ENCODE measurements at regions of chr15 and their contacts with region 1.

Region 1: DNA sequence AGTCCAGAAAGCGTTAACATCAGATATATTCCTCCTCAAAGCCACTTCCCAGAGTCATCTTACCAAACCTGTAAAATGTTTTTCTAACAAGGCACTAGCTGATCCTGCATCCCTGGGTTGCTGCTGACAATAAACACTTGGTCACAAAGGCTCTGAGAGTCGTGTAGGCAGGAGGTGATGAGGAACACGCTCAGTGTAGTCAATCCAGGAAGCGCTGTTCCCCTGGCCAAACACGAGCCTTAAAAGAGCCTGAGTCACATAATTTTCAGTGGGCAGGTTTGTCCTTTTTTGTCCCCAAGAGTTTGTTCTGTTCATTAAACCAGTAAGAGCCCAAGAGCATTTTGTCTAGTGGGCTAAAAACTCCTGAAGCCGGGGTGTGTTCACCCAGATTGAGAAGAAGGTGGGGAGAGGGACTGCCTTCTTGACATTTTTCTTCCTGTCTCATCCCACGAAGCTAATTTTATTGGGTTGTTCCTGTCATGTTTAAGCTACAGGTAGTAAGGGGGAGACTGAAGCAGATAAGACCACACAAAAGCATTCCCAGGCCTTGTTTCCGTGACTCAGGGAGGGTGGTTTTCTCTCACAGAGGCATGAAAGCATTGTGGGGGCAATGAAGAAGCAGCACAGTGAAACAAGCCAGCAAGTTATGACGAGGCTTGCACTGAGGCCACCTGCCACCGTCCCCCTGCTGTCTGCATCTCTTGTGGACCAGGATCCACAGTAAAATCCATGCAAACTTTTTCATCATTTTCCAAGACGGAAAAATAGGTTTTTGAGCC is 73.7 kb downstream of the FOXB1 start:
- DNase-seq: peak; percentile 70
- H3K4me3 Mint-ChIP-seq: no peak overlapping the region
- H3K27ac Mint-ChIP-seq: peak overlapping the region; percentile 62
- H3K4me1 Mint-ChIP-seq: peaks cover 52% of the 10 kb centered on the region
- H3K27me3 Mint-ChIP-seq: peaks cover 13% of the 10 kb centered on the region

Region 2: DNA sequence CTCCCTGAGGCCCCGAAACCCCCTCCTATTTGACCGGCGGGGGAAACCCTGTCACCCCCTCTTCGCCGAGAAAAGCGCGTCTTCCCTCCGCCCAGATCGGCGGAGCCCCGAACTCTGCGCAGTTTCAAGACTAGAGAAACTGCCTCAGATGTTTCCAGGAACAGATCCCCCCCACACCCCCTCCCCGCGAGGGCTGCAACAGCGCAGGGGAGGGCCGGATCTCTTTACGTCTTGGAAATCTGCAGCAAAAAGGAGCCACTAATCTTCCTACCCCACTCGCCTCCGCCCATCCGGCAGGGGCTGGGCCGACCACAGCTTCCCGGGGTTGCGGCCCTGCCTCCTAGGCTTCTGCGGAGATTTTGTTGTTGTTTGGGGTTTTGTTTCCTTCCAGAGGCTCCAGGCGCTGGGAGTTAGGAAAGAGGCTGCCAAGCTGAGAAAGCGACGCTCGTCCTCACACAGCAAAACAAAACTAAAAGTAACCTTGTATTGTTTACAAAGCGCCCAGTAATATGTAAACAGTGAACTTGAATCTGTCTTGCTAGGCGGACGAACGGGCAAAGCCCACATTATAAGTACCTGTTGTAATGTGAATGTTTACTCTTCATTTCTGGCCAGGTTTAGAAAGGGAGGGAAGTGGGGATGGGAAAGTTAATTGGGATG is 71.4 kb before region 1 on chr15:
- CTCF ChIA-PET with region 1: interaction called, 3 read pairs
- POLR2A ChIA-PET with region 1: no interaction called
- intact Hi-C with region 1: loop called (anchors 2 kb)
- DNase-seq: peak; percentile 87
- H3K4me3 Mint-ChIP-seq: peak overlapping the region; percentile 84
- H3K27ac Mint-ChIP-seq: peak overlapping the region; percentile 77
- H3K4me1 Mint-ChIP-seq: peaks cover 45% of the 10 kb centered on the region
- H3K27me3 Mint-ChIP-seq: peaks cover 85% of the 10 kb centered on the region

Region 3: DNA sequence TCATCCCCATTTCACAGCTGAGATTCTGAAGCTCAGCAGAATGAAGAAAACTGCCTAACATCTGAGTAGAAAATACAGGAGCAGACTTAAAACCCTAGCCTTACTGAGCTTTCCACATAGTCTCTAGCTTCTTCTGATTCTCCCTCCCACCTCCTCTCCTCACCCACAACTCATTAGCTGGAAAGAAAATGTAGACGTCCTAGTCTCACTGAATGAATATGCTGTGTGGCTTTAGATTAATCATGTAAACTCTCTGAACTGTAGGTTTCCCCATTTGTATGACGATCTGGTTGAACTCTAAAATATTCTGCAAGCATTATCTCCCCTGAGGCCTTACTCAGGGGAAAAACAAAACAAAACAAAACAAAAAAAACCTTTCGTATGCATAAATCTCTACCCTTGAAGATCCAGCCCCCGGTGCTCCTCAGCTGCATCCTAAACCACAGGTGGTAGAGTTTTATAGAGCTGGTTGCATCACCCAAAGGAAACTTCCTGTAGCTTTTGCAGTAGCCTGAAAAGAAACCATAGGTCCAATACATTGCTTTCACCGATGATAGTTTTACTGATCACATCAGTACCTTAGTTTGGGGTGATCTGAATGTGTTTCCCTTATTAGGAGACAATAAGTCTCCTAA is 33.0 kb before region 1 on chr15:
- CTCF ChIA-PET with region 1: no interaction called
- POLR2A ChIA-PET with region 1: interaction called, 5 read pairs
- intact Hi-C with region 1: loop called (anchors 1 kb)
- DNase-seq: peak; percentile 57
- H3K4me3 Mint-ChIP-seq: peak overlapping the region; percentile 46
- H3K27ac Mint-ChIP-seq: peak overlapping the region; percentile 75
- H3K4me1 Mint-ChIP-seq: peaks cover 19% of the 10 kb centered on the region
- H3K27me3 Mint-ChIP-seq: peaks cover 4% of the 10 kb centered on the region

Region 4: DNA sequence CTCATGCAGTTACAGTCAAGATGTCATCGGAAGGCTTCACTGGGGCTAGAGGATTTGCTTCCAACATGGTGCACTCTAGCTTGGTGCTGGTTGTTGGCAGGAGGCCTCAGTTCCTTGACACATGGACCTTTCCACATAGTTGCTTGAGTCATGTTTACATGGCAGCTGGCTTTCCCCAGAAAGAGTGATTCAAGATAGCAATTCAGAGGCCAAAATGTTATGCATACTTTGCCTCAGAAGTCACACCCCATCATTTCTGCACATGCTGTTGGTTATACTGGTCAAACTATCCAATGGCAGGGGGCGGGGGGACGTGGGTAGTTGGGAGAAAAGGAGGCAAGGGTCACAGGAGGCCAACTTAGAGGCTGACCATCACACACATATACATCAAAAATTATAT is 14.9 kb before region 1 on chr15:
- CTCF ChIA-PET with region 1: no interaction called
- POLR2A ChIA-PET with region 1: no interaction called
- intact Hi-C with region 1: no loop called
- DNase-seq: no peak
- H3K4me3 Mint-ChIP-seq: no peak overlapping the region
- H3K27ac Mint-ChIP-seq: no peak overlapping the region
- H3K4me1 Mint-ChIP-seq: no peaks in the 10 kb centered on the region
- H3K27me3 Mint-ChIP-seq: peaks cover 22% of the 10 kb centered on the region

Measured in activated CD4-positive, alpha-beta memory T cell treated with anti-CD3 and anti-CD28 coated beads for 36 hours (primary cell).